ENCODE measurements at regions of chr4 and their contacts with region 1.

Region 1: GRCh38 chr4:1512738-1513660 is 106.8 kb upstream of the NKX1-1 start:
- DNase-seq: peak in 1 of 2 experiments; percentile 88
- H3K4me3 ChIP-seq: peak overlapping the region; percentile 20 to 55 (median 28); a peak in 6 of 8 replicates
- H3K27ac ChIP-seq: no peak overlapping the region
- H3K4me1 ChIP-seq: peaks cover 0 to 4% (median 3%) of the 10 kb centered on the region in 4 experiments; a peak in 2 of 7 replicates
- H3K27me3 ChIP-seq: peaks cover 0 to 2% (median 0%) of the 10 kb centered on the region in 4 experiments; a peak in 1 of 7 replicates
- CTCF ChIP-seq: peak in 2 of 3 experiments; percentile 73 to 90; a peak in 3 of 4 replicates
- EP300 ChIP-seq: peak in 1 of 2 experiments; percentile 42; a peak in 1 of 3 replicates
- POLR2A ChIP-seq: no peak
- RAD21 ChIP-seq: peak; percentile 52 to 79

Region 2: GRCh38 chr4:1533401-1534064 is 20.5 kb after region 1 on chr4:
- CTCF ChIA-PET with region 1: interaction called, 12 read pairs
- POLR2A ChIA-PET with region 1: no interaction called
- DNase-seq: no peak
- H3K4me3 ChIP-seq: no peak overlapping the region
- H3K27ac ChIP-seq: no peak overlapping the region
- H3K4me1 ChIP-seq: no peaks in the 10 kb centered on the region; a peak in 1 of 7 replicates
- H3K27me3 ChIP-seq: no peaks in the 10 kb centered on the region
- CTCF ChIP-seq: no peak
- EP300 ChIP-seq: no peak
- POLR2A ChIP-seq: no peak
- RAD21 ChIP-seq: no peak

Region 3: DNA sequence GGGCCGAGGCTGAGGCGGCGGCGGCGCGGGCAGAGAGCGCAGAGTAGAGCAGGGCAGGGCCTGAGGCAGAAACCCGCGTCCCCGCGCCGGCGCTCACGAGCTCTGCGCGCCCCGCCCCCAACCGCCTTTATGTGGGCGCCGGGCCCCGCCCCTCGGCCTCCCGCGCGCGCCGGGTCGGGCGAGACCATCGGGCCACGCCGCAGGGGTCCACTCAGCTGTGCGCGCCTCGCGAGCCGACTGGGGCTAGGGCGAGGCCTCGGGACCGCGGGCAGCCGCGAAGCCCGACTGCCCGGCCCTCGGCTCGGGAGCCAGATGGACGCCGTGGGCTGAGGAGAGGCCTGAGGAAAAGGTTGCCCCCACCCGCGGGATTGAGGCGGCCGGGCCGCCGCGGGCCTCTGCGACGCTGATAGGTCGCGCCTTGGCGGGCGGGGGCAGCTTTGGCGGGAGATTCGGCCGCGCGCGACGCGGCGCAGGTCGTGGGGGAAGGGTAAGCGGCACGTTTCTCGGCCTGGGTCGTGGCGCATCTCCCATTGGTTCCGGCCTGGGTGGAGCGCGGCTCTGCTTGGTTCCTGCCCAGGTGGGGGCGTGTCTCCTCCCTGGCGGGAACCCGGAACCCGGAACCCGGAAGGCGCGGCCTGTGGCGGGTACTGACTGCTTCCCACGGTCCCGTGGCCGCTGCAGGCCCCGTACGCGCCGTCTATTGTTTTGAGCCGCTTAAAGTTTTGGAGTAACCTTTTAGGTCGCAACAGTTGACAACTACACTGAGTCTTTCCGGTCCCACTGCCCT is 199.4 kb after region 1 on chr4 and contains the start of gene SLBP:
- CTCF ChIA-PET with region 1: no interaction called
- POLR2A ChIA-PET with region 1: no interaction called
- DNase-seq: peak; percentile 64 to 95
- H3K4me3 ChIP-seq: peak within 1 kb of the TSS; percentile 52 to 89 (median 86)
- H3K27ac ChIP-seq: peak within 1 kb of the TSS; percentile 95; the same call in 1 of the 2 replicates
- H3K4me1 ChIP-seq: peaks cover 0 to 12% (median 3%) of the 10 kb centered on the region in 4 experiments; a peak in 4 of 7 replicates
- H3K27me3 ChIP-seq: no peaks in the 10 kb centered on the region
- CTCF ChIP-seq: no peak
- EP300 ChIP-seq: peak in 1 of 2 experiments; percentile 17; a peak in 1 of 3 replicates
- POLR2A ChIP-seq: peak in 1 of 2 experiments; percentile 82; a peak in 2 of 3 replicates
- RAD21 ChIP-seq: no peak
- total RNA-seq, gene SLBP: 45.1 and 49.0 TPM in 2 replicates

Region 4: DNA sequence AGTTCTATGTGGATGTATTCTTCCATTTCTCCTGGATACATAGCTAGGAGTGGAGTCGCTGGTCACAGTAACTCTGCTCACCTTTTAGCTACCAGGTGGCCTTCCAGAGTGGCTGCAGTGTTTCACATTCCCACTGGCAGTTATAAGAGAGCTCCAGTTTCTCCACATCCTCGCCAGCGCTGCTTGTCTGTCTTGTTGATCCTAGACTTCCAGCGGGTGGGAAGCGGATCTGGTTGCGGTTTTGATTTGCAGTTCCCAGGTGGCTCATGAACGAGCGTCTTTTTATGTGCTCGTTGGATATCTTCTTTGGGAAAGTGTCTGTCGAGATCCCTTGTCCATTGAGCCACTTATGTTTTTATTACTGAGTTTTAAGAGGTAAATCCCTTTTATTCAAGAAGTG is 219.9 kb after region 1 on chr4:
- CTCF ChIA-PET with region 1: no interaction called
- POLR2A ChIA-PET with region 1: no interaction called
- DNase-seq: no peak
- H3K4me3 ChIP-seq: no peak overlapping the region
- H3K27ac ChIP-seq: no peak overlapping the region
- H3K4me1 ChIP-seq: no peaks in the 10 kb centered on the region
- H3K27me3 ChIP-seq: no peaks in the 10 kb centered on the region
- CTCF ChIP-seq: no peak
- EP300 ChIP-seq: no peak
- POLR2A ChIP-seq: no peak
- RAD21 ChIP-seq: no peak

Measured in H1 (cell line).